Dendritic cell treated with granulocyte-macrophage colony-stimulating factor and Interleukin-4, amounts not matched to agents 40 ng/mL and 50 ng/mL, for 4 days (primary cell): ENCODE measurements at regions of chr12 and their contacts with region 1.

Region 1: DNA sequence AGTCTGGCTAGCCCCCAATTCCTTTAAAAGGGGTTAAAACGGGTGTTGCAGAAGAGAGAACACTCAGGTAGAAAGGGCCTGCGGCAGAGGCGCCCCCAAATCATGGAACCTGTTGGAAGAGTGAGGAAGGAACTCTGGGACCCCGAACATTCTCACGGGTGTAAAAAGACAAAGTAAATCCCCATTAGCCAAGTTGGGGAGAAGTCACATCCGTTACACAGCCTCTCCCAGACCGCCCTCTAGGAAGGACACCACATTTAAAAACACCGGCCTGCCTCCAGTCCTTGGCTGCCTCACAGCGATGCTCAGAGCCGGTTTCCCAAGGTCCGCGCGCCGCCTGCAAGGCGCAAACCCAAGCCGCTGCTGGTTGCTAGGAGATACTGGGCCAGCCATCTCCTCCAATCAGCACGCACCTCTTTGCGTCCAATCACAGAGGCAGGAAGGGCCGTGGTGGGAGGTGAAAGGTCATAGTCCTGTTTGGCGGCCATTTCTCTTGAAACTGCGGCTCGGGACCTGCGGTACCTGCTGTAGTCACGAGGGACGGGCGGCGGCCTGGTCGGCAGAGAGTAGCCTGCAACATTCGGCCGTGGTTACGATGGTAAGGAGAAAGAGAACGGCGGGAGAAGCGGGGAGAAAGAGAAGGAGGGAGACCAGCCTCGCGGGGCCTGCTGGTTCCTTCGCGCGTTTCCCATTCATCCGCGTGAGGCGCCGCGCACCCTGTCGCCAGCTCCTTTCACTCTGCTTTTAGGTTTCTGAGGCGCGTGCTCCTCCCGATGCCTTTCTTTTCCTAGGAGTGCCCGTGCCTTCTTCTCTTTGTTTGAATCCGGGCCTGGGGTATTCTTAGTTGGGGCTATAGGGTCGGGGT is at the start of gene SNRPF:
- H3K4me3 Mint-ChIP-seq: peak within 1 kb of the TSS; percentile 56
- H3K27ac Mint-ChIP-seq: no peak within 1 kb of the TSS
- H3K4me1 Mint-ChIP-seq: peaks cover 11% of the 10 kb centered on the region
- H3K27me3 Mint-ChIP-seq: peaks cover 18% of the 10 kb centered on the region

Region 2: GRCh38 chr12:95385246-95386035 is 473.3 kb before region 1 on chr12:
- intact Hi-C with region 1: no loop called
- H3K4me3 Mint-ChIP-seq: no peak overlapping the region
- H3K27ac Mint-ChIP-seq: no peak overlapping the region
- H3K4me1 Mint-ChIP-seq: peaks cover 5% of the 10 kb centered on the region
- H3K27me3 Mint-ChIP-seq: peaks cover 2% of the 10 kb centered on the region

Region 3: DNA sequence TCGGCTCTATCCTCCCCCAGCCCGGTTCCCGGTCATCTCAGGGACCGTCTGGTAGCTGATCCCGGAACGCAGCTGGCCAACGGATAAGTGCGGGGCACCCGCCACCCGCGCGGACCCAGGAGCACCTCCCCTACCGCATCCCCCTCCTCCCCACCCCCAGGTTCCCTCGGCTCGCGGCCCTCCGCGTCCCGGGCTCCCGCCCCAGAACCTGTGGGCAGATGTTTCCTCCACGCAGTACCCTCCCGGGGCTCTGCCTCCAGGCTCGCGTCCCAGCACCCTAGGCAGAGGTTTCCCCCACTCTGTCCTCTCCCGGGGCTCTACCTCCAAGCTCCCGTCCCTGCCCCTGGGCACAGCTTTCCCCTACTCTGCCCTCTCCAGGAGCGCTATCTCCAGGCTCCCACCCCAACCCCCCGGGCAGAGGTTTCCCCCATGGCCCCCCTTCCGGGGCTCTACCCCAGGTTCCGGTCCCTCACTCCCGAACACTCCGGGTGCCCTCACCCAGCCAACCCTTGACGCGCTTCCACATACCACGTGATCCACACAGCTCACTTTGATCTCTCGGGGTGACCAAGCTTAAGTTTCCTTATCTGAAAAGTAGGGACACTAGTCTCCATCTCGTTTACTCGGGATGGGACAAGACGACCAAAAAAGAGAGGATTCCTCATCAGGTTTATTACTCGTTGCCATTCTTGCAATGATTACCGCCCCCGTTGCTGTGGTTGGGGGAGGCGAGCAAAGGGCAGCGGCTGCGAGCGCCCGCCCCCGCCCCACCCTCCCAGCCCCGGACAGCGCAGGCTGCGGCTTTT is 84.0 kb after region 1 on chr12 and contains the start of gene CCDC38:
- intact Hi-C with region 1: loop called (anchors 2 kb)
- H3K4me3 Mint-ChIP-seq: peak within 1 kb of the TSS; percentile 84
- H3K27ac Mint-ChIP-seq: peak within 1 kb of the TSS; percentile 84
- H3K4me1 Mint-ChIP-seq: peaks cover 8% of the 10 kb centered on the region
- H3K27me3 Mint-ChIP-seq: peaks cover 1% of the 10 kb centered on the region